ENCODE measurements at regions of chr2 and their contacts with region 1.

Region 1: GRCh38 chr2:127486247-127487058 is 39.8 kb downstream of the IWS1 start:
- DNase-seq: no peak
- ATAC-seq: no peak
- H3K4me3 ChIP-seq: no peak overlapping the region
- H3K4me3 Mint-ChIP-seq: peak overlapping the region; percentile 55
- H3K27ac ChIP-seq: peak overlapping the region; percentile 21
- H3K27ac Mint-ChIP-seq: peak overlapping the region; percentile 82 to 90
- H3K4me1 ChIP-seq: peaks cover 19% of the 10 kb centered on the region
- H3K4me1 Mint-ChIP-seq: peaks cover 30 to 37% of the 10 kb centered on the region in 2 donors
- H3K27me3 ChIP-seq: no peaks in the 10 kb centered on the region
- H3K27me3 Mint-ChIP-seq: no peaks in the 10 kb centered on the region
- CTCF ChIP-seq: no peak

Region 2: GRCh38 chr2:127197475-127198385 is 288.7 kb before region 1 on chr2:
- intact Hi-C with region 1: loop called (anchors 10 kb)
- DNase-seq: peak; percentile 28 to 64
- ATAC-seq: peak; percentile 68 to 93 (median 72)
- H3K4me3 ChIP-seq: no peak overlapping the region
- H3K4me3 Mint-ChIP-seq: peak overlapping the region; percentile 80
- H3K27ac ChIP-seq: no peak overlapping the region
- H3K27ac Mint-ChIP-seq: no peak overlapping the region
- H3K4me1 ChIP-seq: peaks cover 6% of the 10 kb centered on the region
- H3K4me1 Mint-ChIP-seq: peaks cover 5 to 7% of the 10 kb centered on the region in 2 donors
- H3K27me3 ChIP-seq: peaks cover 3% of the 10 kb centered on the region
- H3K27me3 Mint-ChIP-seq: peaks cover 0 to 8% of the 10 kb centered on the region in 2 donors
- CTCF ChIP-seq: peak; percentile 8

Measured in natural killer cell (primary cell).